Naive thymus-derived CD4-positive, alpha-beta T cell (primary cell): ENCODE measurements at regions of chr2 and their contacts with region 1.

Region 1: GRCh38 chr2:190880378-190881073 is at the start of gene GLS:
- DNase-seq: peak; percentile 89 to 97 (median 95)
- ATAC-seq: peak; percentile 87
- H3K4me3 ChIP-seq: peak within 1 kb of the TSS; percentile 92
- H3K4me3 Mint-ChIP-seq: peak within 1 kb of the TSS; percentile 90 to 100 (median 96)
- H3K27ac ChIP-seq: peak within 1 kb of the TSS; percentile 93
- H3K27ac Mint-ChIP-seq: peak within 1 kb of the TSS; percentile 95 to 98 (median 97)
- H3K4me1 ChIP-seq: peaks cover 17 to 23% of the 10 kb centered on the region in 2 donors
- H3K4me1 Mint-ChIP-seq: peaks cover 25 to 72% (median 62%) of the 10 kb centered on the region in 7 donors
- H3K27me3 ChIP-seq: no peaks in the 10 kb centered on the region
- H3K27me3 Mint-ChIP-seq: no peaks in the 10 kb centered on the region
- total RNA-seq, gene GLS: 167 to 234 (median 202) TPM

Region 2: DNA sequence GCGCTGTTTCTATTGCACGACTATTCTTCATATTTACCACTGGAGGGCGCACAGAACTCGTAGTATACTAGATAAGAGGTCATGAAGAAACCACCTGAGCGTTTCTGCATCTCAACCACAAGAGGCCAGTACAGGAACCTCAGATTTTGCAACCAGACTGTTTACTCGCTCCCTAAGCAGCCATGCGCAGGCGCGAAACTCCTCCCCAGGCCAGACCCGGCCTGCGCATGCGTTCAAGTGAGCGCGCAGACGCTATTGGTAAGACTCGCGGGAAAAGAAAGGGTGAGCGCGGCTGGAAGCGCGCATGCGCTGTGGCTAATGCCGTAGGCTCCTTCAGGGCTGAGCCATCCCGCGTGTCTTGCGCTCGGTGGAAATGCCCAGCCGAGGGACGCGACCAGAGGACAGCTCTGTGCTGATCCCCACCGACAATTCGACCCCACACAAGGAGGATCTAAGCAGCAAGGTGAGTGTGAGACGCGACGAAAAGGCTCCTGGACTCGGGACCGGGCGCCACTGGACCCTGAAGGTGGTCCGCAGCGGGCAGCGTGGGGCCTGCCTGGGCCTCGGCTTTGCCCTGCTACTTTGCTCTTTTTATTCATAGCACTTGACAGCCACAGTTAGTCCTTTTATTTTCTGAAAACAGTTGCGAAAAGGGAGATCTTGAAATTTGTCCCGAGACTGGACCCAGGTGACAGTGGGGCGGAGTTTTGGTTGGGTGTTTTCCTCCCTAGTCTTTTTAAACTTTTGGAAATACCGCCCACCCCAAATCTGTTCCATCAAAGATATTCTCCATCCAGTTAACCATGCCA is 1219.2 kb before region 1 on chr2 and contains the start of gene ASNSD1:
- CTCF ChIA-PET with region 1: no interaction called
- POLR2A ChIA-PET with region 1: no interaction called
- intact Hi-C with region 1: loop called in 1 of 2 experiments (anchors 1 kb)
- DNase-seq: peak; percentile 97 to 100 (median 99)
- ATAC-seq: peak; percentile 97
- H3K4me3 ChIP-seq: peak within 1 kb of the TSS; percentile 86
- H3K4me3 Mint-ChIP-seq: no peak within 1 kb of the TSS
- H3K27ac ChIP-seq: peak within 1 kb of the TSS; percentile 95
- H3K27ac Mint-ChIP-seq: peak within 1 kb of the TSS in 1 of 9 donors; percentile 91
- H3K4me1 ChIP-seq: peaks cover 32 to 38% of the 10 kb centered on the region in 2 donors
- H3K4me1 Mint-ChIP-seq: peaks cover 32 to 62% (median 43%) of the 10 kb centered on the region in 7 donors
- H3K27me3 ChIP-seq: no peaks in the 10 kb centered on the region
- H3K27me3 Mint-ChIP-seq: no peaks in the 10 kb centered on the region
- total RNA-seq, gene ASNSD1: 24.0 to 48.9 (median 40.7) TPM

Region 3: DNA sequence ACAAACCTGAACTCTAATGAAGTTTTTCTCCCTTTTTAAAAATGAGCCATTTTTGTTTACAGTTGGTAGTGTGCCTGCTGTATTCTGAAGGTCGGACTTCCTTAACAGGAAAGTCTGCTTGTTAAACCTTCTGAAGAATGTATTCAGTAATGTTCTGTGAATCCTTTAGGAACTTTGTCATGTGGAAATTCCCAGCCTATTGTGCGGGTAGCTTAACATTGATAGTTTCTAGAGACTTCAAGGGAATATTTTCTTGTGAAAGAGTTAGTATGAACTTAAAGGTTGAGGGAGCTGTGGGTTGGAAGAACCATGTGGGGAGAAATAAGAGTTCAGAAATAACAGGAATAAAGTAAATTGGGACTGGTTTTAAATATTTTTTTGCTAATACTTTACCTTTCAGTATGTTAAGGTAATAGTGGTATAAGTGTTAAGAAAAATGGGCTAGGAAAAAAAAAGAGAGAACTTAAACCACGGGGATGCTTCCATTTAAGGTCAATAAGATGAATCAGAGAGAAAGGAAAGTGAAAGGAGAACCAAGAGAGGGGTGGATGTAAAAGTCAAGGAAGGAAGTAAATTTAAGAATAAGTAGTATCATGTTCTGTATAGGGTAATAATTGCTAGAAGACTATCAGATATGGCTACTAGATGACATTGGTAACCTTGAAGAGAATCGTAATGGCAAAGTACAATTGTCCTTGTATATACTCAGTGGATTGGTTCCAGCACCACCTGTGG is 1005.8 kb before region 1 on chr2:
- CTCF ChIA-PET with region 1: no interaction called
- POLR2A ChIA-PET with region 1: no interaction called
- intact Hi-C with region 1: loop called in 1 of 2 experiments (anchors 5 kb)
- DNase-seq: no peak
- ATAC-seq: peak; percentile 38
- H3K4me3 ChIP-seq: no peak overlapping the region
- H3K4me3 Mint-ChIP-seq: peak overlapping the region in 1 of 10 donors; percentile 26
- H3K27ac ChIP-seq: no peak overlapping the region
- H3K27ac Mint-ChIP-seq: peak overlapping the region in 4 of 9 donors; percentile 0 to 75 (median 20)
- H3K4me1 ChIP-seq: no peaks in the 10 kb centered on the region
- H3K4me1 Mint-ChIP-seq: peaks cover 5 to 17% (median 7%) of the 10 kb centered on the region in 7 donors
- H3K27me3 ChIP-seq: no peaks in the 10 kb centered on the region
- H3K27me3 Mint-ChIP-seq: no peaks in the 10 kb centered on the region

Region 4: GRCh38 chr2:190648289-190649034 is 232.1 kb before region 1 on chr2:
- CTCF ChIA-PET with region 1: no interaction called
- POLR2A ChIA-PET with region 1: interaction called, 3 read pairs
- intact Hi-C with region 1: loop called (anchors 1 to 2 kb)
- DNase-seq: peak; percentile 83 to 93 (median 89)
- ATAC-seq: peak; percentile 91
- H3K4me3 ChIP-seq: peak overlapping the region; percentile 62
- H3K4me3 Mint-ChIP-seq: peak overlapping the region; percentile 76 to 92 (median 88)
- H3K27ac ChIP-seq: peak overlapping the region; percentile 92
- H3K27ac Mint-ChIP-seq: peak overlapping the region; percentile 15 to 98 (median 90)
- H3K4me1 ChIP-seq: peaks cover 10 to 16% of the 10 kb centered on the region in 2 donors
- H3K4me1 Mint-ChIP-seq: peaks cover 10 to 54% (median 47%) of the 10 kb centered on the region in 7 donors
- H3K27me3 ChIP-seq: no peaks in the 10 kb centered on the region
- H3K27me3 Mint-ChIP-seq: no peaks in the 10 kb centered on the region

Region 5: GRCh38 chr2:190896477-190896876 is 16.0 kb after region 1 on chr2:
- CTCF ChIA-PET with region 1: interaction called, 3 read pairs
- POLR2A ChIA-PET with region 1: interaction called, 63 read pairs
- intact Hi-C with region 1: loop called in 1 of 2 experiments (anchors 1 kb)
- DNase-seq: no peak
- ATAC-seq: no peak
- H3K4me3 ChIP-seq: no peak overlapping the region
- H3K4me3 Mint-ChIP-seq: no peak overlapping the region
- H3K27ac ChIP-seq: no peak overlapping the region
- H3K27ac Mint-ChIP-seq: peak overlapping the region in 6 of 9 donors; percentile 13 to 59 (median 38)
- H3K4me1 ChIP-seq: peaks cover 0 to 15% of the 10 kb centered on the region in 2 donors
- H3K4me1 Mint-ChIP-seq: peaks cover 12 to 37% (median 35%) of the 10 kb centered on the region in 7 donors
- H3K27me3 ChIP-seq: no peaks in the 10 kb centered on the region
- H3K27me3 Mint-ChIP-seq: no peaks in the 10 kb centered on the region

Region 6: DNA sequence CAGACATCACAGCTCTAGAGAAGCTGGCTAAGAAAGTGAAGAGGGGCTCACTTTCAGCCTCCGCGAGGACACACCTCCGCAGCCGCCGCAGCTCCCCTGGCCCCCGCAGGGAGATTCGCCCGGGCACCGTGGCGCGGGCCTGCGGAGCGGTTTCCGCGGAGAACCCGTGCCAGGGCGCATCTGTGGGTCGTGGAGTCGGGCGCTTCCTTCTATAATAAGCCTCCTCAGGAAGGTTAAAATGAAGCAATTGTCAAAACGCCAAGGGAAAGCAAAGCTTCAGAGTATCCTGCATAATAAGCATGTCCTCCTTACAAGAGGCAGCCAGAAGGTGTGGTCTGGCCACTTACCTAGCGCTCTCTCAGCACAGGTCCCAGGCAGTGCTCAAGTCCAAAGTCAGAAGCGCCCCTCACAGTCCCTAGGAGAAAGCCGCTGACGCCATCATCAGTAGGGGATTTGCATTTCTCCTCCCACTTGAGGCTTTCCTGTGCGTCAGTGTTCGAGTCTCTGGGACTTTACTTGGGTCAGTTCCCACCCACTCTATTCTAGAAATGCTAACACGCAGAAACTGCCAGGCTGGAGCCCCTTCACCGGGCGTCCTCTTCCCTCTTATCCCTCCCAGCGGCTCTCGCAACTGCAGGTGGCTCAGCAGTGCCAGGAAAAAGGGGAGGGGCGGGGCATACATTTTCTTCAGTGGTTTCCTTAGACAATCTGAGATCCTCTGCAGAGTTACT is 270.2 kb after region 1 on chr2 and contains the start of gene STAT4:
- CTCF ChIA-PET with region 1: interaction called, 3 read pairs
- POLR2A ChIA-PET with region 1: interaction called, 4 read pairs
- intact Hi-C with region 1: loop called (anchors 1 to 2 kb)
- DNase-seq: peak; percentile 55 to 92 (median 84)
- ATAC-seq: peak; percentile 91
- H3K4me3 ChIP-seq: peak within 1 kb of the TSS; percentile 96
- H3K4me3 Mint-ChIP-seq: peak within 1 kb of the TSS; percentile 87 to 99 (median 95)
- H3K27ac ChIP-seq: peak within 1 kb of the TSS; percentile 98
- H3K27ac Mint-ChIP-seq: peak within 1 kb of the TSS; percentile 89 to 99 (median 95)
- H3K4me1 ChIP-seq: peaks cover 33 to 57% of the 10 kb centered on the region in 2 donors
- H3K4me1 Mint-ChIP-seq: peaks cover 33 to 70% (median 55%) of the 10 kb centered on the region in 7 donors
- H3K27me3 ChIP-seq: no peaks in the 10 kb centered on the region
- H3K27me3 Mint-ChIP-seq: no peaks in the 10 kb centered on the region
- total RNA-seq, gene STAT4: 106 to 132 (median 122) TPM